Gastrocnemius medialis (tissue), 4 donors: ENCODE measurements at regions of chr3 and their contacts with region 1.

Region 1: DNA sequence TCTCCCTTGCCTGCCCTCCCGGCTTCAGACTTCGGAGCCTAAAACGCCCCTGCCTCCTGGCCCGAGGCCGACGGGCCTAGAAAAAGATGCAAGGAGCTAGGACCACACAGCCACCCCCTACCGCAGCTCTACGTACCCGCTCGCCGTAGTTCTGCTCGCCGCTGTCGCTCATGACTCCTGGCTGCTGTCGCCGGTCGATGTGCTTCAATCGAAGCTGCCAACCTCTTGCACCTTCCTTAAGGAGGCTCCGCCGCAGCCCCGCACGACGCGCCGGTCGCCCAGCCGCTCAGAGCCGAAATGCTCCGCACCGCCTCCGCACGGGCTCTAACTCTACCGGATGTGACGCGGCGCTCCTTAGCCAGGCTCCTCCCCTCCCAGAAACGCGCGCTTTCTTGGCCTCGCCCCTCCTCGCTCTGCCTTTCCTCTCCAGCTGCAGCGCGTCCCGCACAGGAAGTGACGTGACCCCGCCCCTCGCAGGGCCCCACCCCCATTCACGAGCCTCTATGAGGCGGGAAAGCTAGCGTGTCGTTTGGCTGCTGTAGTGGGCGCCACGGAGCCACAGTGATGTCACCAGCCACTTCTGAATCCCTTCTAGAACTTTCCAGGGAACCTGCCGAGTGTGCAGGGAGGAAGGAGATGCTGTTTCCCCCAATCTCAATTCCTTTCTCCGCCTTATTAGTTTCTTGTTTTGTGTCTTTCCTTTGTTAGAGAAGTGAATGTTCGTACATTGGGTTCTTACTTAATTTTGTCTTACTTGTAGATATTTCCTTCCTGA is at the start of gene TRA2B:
- DNase-seq: peak; percentile 99
- ATAC-seq: peak; percentile 93 to 94
- H3K4me3 ChIP-seq: peak within 1 kb of the TSS; percentile 97 to 99 (median 98)
- H3K27ac ChIP-seq: peak within 1 kb of the TSS; percentile 100
- H3K4me1 ChIP-seq: peaks cover 22 to 25% of the 10 kb centered on the region in 2 donors
- H3K27me3 ChIP-seq: no peaks in the 10 kb centered on the region
- CTCF ChIP-seq: no peak
- POLR2A ChIP-seq: peak; percentile 100
- total RNA-seq, gene TRA2B: 57.5 to 234 (median 65.1) TPM

Region 2: DNA sequence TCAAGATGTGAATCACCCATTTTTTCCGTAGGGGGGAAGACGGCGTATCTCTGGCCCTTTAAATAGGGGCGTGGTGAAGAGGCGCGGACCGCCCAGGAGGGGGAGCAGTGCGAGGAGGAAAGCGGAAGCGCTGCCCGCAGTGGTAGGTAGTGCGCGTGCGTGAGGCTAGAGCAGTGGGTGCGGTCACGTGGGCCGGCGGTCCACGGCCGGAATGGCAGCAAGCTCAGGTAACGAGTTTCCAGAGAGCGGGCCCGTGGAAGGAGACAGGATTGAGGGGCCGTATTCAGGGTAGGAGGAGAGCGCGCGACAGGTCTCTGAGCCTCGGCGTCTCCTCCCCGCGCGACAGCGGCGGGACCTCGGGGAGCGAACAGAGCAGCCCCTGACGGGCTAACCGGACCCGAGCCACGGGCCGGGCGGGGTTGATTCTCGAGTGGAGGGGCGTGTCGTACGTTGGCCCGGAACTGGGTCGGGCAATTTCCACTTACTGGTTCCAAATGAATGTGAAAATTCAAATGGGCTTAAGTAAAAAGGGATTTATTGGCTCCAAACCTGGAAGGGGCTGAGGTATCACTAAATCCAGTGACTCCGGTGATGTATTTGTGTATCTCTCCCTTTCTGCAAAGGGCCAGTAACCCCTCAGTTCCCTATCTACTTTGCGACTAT is 1125.7 kb before region 1 on chr3 and contains the start of gene VPS8:
- in situ Hi-C with region 1: no loop called
- intact Hi-C with region 1: loop called (anchors 10 kb)
- DNase-seq: peak; percentile 92 to 96
- ATAC-seq: peak; percentile 81 to 83
- H3K4me3 ChIP-seq: peak within 1 kb of the TSS; percentile 70 to 87 (median 82)
- H3K27ac ChIP-seq: peak within 1 kb of the TSS; percentile 89 to 94 (median 90)
- H3K4me1 ChIP-seq: peaks cover 45 to 51% of the 10 kb centered on the region in 2 donors
- H3K27me3 ChIP-seq: no peaks in the 10 kb centered on the region
- CTCF ChIP-seq: peak in 4 of 5 experiments; percentile 77 to 89 (median 81)
- POLR2A ChIP-seq: peak; percentile 98
- total RNA-seq, gene VPS8: 37.2 to 64.1 (median 51.2) TPM

Region 3: DNA sequence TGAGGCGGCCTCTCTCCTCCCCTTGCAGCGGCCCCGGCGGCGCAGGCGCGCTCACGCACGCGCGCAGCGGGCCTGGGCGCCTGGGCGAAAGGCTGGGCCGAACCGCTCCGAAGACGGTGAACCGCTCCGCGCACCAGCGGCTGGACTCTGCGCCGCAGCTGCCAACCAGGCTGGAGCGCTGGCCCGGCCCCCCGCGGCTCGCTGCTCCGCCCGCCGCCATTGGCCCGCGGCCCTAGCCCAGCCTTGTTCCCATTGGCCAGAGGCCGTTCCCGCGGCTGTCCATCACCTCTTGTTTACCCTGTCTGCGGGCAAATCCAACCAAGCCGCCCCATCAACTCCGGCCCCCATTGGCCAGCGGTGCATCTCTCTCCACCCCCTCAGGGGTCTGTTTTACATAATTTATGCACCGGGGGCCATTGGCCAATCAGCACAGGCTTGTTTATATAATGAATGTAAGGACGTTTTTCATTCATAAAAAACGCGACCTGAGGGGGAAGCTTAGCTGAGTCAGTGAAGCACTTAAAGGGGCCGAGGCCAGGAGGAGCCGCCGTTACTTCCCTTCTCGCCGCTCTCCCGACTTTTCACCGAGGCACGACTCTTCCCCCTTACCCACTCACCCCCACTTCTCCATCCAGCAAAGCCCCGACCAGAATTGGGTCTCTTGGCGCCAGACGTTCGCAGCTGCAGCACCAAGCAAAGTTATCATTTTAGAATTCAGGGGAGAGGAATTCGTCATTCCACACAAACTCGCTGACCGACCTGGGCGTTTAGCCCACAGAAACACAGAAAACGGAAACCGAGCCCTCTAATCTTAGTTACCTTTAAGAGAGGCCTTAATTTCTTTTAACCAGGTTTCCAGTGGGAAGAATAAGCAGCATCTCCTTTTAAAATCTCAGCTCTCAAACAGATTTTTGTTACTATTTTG is 171.3 kb after region 1 on chr3 and contains the start of gene ETV5:
- in situ Hi-C with region 1: no loop called
- intact Hi-C with region 1: loop called (anchors 2 kb)
- DNase-seq: peak; percentile 100
- ATAC-seq: peak; percentile 90 to 93
- H3K4me3 ChIP-seq: peak within 1 kb of the TSS; percentile 77 to 87 (median 80)
- H3K27ac ChIP-seq: peak within 1 kb of the TSS; percentile 88 to 95 (median 91)
- H3K4me1 ChIP-seq: peaks cover 18 to 23% of the 10 kb centered on the region in 2 donors
- H3K27me3 ChIP-seq: peaks cover 0 to 6% (median 3%) of the 10 kb centered on the region in 3 donors
- CTCF ChIP-seq: peak in 2 of 5 experiments; percentile 20 to 21
- POLR2A ChIP-seq: peak; percentile 86 to 95
- total RNA-seq, gene ETV5: 19.0 to 31.6 (median 21.3) TPM

Region 4: GRCh38 chr3:186220911-186221645 is 283.2 kb after region 1 on chr3:
- in situ Hi-C with region 1: no loop called
- intact Hi-C with region 1: loop called (anchors 1 kb)
- DNase-seq: peak; percentile 78 to 90
- ATAC-seq: peak; percentile 73 to 78
- H3K4me3 ChIP-seq: no peak overlapping the region
- H3K27ac ChIP-seq: peak overlapping the region; percentile 85 to 95 (median 92)
- H3K4me1 ChIP-seq: peaks cover 42 to 67% of the 10 kb centered on the region in 2 donors
- H3K27me3 ChIP-seq: no peaks in the 10 kb centered on the region
- CTCF ChIP-seq: peak in 4 of 5 experiments; percentile 18 to 51 (median 32)
- POLR2A ChIP-seq: peak; percentile 59 to 74

Region 5: DNA sequence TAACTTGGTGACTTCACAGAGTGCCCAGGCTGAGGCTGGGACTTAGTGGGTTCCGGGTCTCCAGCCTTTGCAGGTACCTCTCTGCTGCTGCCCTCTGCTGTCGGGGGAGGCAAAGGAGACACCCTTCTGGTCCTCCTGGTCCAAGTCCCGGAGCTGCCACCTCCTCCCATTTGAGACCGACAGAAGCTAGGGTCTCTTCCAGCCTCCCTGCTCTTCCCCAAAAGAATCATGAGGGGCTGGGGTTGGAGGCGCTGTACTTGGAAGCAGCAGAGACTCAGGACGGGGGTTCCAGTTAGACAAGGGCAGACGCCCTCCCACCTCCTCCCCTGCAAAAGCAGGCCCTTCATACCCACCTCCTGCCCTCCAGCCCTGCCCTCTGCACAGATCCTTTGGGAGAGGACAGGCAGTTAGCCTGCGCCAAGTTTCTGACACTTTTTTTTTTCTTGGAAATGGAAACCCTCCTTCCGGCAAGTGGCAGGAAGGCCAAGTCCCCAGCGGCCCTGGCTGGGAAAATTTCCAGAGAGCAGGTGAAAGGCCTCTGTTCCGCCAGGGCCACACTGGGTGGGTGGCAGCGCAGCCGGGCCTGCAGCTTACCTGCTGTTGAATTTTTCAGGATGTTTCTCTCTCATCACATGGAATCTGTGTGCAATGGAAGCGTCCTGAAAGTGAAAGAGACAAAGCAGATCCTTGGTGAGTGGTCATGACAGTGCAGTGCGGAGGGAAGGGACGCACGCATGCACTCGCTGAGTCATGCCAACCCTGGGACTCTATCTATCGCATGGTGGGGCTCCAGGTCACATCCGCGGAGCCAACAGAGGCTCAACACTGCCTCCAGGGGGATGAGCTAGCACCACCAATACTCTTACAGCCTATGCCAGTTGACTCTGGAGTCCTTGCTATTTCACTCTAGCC is 304.3 kb after region 1 on chr3:
- in situ Hi-C with region 1: no loop called
- intact Hi-C with region 1: loop called (anchors 5 kb)
- DNase-seq: peak; percentile 61 to 84
- ATAC-seq: peak; percentile 79 to 88
- H3K4me3 ChIP-seq: peak overlapping the region; percentile 30 to 59 (median 54)
- H3K27ac ChIP-seq: peak overlapping the region; percentile 85 to 88 (median 86)
- H3K4me1 ChIP-seq: peaks cover 25 to 28% of the 10 kb centered on the region in 2 donors
- H3K27me3 ChIP-seq: no peaks in the 10 kb centered on the region
- CTCF ChIP-seq: peak; percentile 54 to 71 (median 62)
- POLR2A ChIP-seq: peak in 1 of 2 donors; percentile 21

Region 6: DNA sequence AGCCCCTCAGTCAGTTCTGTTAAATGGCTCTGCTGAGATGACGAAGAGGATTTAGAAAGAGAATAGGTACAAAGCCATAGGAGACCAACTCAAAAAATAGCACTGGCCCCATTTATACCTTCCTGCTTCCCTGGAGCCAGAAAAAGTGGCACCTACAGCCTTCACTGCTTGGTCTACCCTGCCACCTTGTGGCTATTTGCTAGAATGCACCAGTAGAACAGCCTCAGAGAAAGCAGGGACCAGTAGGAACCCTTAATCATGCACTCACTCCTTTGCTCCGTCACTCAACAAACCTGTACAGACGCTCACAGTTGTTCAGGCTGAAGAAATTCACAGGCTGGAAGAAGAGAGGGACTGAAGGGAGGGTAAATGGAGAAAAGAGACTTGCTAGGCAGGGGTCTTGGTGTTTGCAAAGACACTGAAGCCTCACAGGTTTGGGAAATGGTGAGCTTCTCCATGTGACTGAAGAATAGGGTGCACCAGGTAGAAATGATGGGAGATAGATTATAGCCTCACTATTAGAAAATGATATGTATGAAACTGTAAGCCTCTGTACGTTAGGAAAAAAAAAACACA is 1776.6 kb after region 1 on chr3:
- in situ Hi-C with region 1: loop called in 1 of 4 experiments (anchors 25 kb)
- intact Hi-C with region 1: no loop called
- DNase-seq: peak; percentile 60 to 80
- ATAC-seq: peak; percentile 70 to 82
- H3K4me3 ChIP-seq: no peak overlapping the region
- H3K27ac ChIP-seq: peak overlapping the region in 3 of 4 donors; percentile 43 to 67 (median 47)
- H3K4me1 ChIP-seq: peaks cover 17 to 24% of the 10 kb centered on the region in 2 donors
- H3K27me3 ChIP-seq: no peaks in the 10 kb centered on the region
- CTCF ChIP-seq: peak; percentile 94 to 96 (median 95)
- POLR2A ChIP-seq: no peak